Activated CD4-positive, alpha-beta memory T cell treated with anti-CD3 and anti-CD28 coated beads, Interleukin-2, amount 10 ng/mL, durations not matched to agents 7 days and 5 days (primary cell): ENCODE measurements at regions of chr22 and their contacts with region 1.

Region 1: DNA sequence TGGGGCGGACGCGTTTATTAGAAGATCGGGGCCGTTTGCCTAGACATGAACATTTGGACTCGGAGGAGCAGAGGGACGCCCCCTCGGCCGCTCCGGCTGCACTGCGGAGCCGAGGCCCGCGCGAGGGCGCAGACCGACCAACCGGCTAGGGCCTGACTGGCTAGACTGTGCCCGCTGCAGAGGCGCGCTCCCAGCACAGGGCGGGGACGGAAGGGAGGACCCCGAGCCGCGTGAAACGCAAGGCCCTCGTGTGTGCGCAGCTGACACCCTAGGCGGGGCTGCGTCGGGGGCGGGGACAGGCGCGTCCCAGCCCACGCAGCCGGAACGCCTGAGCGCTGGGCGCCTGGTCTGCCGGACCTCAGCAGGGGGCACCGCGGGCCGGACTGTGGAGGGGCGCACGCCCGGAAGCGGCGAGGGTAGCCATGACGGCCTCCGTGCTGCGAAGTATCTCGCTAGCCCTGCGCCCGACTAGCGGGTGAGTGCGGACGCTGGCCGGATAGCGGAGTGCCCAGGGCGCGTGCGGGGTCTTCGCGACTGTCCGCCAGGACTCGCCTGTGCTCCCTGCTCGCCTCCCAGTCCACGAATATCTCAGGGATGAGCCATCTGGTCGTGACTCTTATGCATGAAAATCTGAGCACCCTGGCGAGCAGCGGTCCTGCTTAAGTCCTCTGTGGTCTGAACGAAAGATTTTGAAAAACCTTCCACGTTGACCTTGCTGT is at the start of gene MRPL40:
- DNase-seq: peak; percentile 90
- H3K4me3 Mint-ChIP-seq: peak within 1 kb of the TSS; percentile 91
- H3K27ac Mint-ChIP-seq: peak within 1 kb of the TSS; percentile 96
- H3K4me1 Mint-ChIP-seq: peaks cover 45% of the 10 kb centered on the region
- H3K27me3 Mint-ChIP-seq: no peaks in the 10 kb centered on the region
- total RNA-seq, gene MRPL40: 22.4 to 24.6 TPM

Region 2: GRCh38 chr22:19419464-19420178 is 12.7 kb before region 1 on chr22:
- CTCF ChIA-PET with region 1: interaction called, 5 read pairs
- POLR2A ChIA-PET with region 1: interaction called, 82 read pairs
- DNase-seq: peak; percentile 67
- H3K4me3 Mint-ChIP-seq: peak overlapping the region; percentile 12
- H3K27ac Mint-ChIP-seq: peak overlapping the region; percentile 87
- H3K4me1 Mint-ChIP-seq: peaks cover 71% of the 10 kb centered on the region
- H3K27me3 Mint-ChIP-seq: no peaks in the 10 kb centered on the region

Region 3: GRCh38 chr22:19447388-19448075 is 15.2 kb after region 1 on chr22 and contains the start of gene C22orf39:
- CTCF ChIA-PET with region 1: interaction called, 4 read pairs
- POLR2A ChIA-PET with region 1: interaction called, 113 read pairs
- DNase-seq: peak; percentile 91
- H3K4me3 Mint-ChIP-seq: peak within 1 kb of the TSS; percentile 80
- H3K27ac Mint-ChIP-seq: peak within 1 kb of the TSS; percentile 82
- H3K4me1 Mint-ChIP-seq: peaks cover 37% of the 10 kb centered on the region
- H3K27me3 Mint-ChIP-seq: no peaks in the 10 kb centered on the region
- total RNA-seq, gene C22orf39: 31.8 to 32.9 TPM

Region 4: DNA sequence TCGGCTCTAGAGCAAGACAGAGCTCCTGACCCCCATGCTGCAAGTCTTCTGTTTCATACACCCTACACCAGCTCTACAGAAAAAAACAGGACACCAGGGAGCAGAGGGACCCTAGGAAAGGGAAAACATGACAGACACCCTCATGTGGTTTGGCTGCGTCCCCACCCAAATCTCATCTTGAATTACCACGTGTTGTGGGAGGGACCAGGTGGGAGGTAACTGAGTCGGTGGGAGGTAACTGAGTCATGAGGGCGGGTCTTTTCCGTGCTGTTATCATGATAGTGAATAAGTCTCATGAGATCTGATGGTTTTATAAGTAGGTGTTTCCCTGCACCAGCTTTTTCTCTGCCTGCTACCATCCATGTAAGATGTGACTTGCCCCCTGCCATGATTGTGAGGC is 21.9 kb after region 1 on chr22:
- CTCF ChIA-PET with region 1: no interaction called
- POLR2A ChIA-PET with region 1: interaction called, 113 read pairs
- DNase-seq: no peak
- H3K4me3 Mint-ChIP-seq: no peak overlapping the region
- H3K27ac Mint-ChIP-seq: no peak overlapping the region
- H3K4me1 Mint-ChIP-seq: peaks cover 4% of the 10 kb centered on the region
- H3K27me3 Mint-ChIP-seq: no peaks in the 10 kb centered on the region

Region 5: GRCh38 chr22:19479357-19480172 is 47.3 kb after region 1 on chr22 and contains the start of gene CDC45:
- CTCF ChIA-PET with region 1: interaction called, 6 read pairs
- POLR2A ChIA-PET with region 1: interaction called, 59 read pairs
- DNase-seq: peak; percentile 96
- H3K4me3 Mint-ChIP-seq: peak within 1 kb of the TSS; percentile 100
- H3K27ac Mint-ChIP-seq: peak within 1 kb of the TSS; percentile 95
- H3K4me1 Mint-ChIP-seq: peaks cover 46% of the 10 kb centered on the region
- H3K27me3 Mint-ChIP-seq: no peaks in the 10 kb centered on the region
- total RNA-seq, gene CDC45: 53.2 to 56.2 TPM